ENCODE measurements at regions of chr19 and their contacts with region 1.

Region 1: DNA sequence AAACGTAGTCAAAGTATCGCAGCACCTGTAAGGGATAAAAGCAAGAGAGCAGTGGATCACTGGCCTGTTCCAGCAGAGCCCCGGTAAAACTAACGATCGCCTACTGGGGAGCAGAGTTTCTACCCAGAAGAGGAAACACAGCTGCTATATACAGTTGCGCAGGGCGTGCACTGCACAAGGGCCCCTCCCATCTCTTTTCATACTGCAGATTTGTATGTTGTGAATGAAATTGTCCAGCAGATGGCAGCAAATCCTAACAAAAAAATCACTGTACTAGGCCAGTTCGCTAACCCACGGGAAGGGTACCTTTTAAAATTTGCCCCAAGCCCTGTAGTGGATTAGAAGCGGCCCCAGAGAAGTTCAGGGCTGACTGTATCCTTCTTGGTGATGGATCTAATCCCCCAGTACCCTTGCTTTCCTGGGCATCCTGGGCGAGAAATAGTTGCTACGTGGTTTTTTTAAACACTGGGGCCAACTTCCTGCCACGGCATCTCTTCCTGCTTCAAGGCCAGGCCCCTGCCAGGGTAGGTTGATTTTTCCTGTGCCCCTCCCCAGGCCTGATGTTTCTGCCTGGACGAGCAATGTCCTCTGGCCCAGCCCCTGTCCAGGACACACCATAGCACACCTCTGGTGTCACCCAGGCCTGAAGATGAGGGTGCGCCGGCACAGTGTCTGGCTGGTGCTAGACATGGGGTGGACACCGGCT is 127.0 kb downstream of the IER2 start:
- DNase-seq: peak; percentile 26 to 88 (median 59)
- ATAC-seq: peak; percentile 89
- H3K4me3 ChIP-seq: peak overlapping the region; percentile 23 to 31
- H3K4me3 Mint-ChIP-seq: peak overlapping the region; percentile 48
- H3K27ac ChIP-seq: peak overlapping the region in 1 of 2 experiments; percentile 75
- H3K27ac Mint-ChIP-seq: peak overlapping the region; percentile 84
- H3K4me1 ChIP-seq: peaks cover 7% of the 10 kb centered on the region
- H3K4me1 Mint-ChIP-seq: peaks cover 17% of the 10 kb centered on the region
- H3K27me3 ChIP-seq: no peaks in the 10 kb centered on the region
- H3K27me3 Mint-ChIP-seq: peaks cover 8% of the 10 kb centered on the region
- CTCF ChIP-seq: peak; percentile 77

Region 2: DNA sequence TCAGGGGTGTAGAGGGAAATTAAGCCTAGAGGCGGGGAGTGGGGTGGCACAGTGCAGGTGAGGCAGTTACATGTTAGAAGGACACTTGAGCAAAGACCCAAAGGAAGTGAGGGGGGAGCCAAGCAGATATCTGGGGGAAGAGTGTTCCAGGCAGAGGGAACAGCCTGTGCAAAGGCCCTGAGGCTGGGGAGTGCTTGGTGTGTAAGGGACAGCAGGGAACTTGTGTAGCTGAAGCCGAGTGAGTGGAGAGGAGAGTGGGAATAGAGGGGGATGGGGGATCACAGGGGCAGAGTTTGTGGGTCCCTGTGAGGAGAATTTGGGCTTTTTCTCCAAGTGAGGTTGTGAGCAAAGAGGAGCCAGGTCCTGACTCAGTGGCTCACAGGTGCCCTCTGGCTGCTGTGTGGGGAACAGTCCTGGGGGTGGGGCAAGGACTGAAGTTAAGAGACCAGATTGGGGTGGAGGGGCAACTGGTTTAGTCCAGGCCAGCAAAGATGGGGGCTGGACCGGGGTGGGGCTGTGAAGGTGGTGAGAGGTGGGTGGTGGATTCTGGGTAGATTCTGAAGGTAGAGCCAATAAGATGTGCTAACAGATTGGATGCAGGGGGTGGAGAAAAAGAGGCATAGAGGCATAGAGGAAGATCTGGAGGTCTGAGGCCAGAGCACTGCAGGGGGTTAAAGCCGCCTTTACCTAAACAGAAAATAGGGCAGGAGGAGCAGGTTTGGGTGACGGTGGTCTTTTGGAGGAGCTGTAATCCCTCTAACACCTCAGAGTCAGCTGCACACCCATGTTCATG is 153.7 kb after region 1 on chr19:
- CTCF ChIA-PET with region 1: interaction called, 13 read pairs
- POLR2A ChIA-PET with region 1: no interaction called
- intact Hi-C with region 1: loop called in 1 of 2 experiments (anchors 1 kb)
- DNase-seq: peak; percentile 10 to 56 (median 42)
- ATAC-seq: peak; percentile 58
- H3K4me3 ChIP-seq: no peak overlapping the region
- H3K4me3 Mint-ChIP-seq: no peak overlapping the region
- H3K27ac ChIP-seq: no peak overlapping the region
- H3K27ac Mint-ChIP-seq: no peak overlapping the region
- H3K4me1 ChIP-seq: no peaks in the 10 kb centered on the region
- H3K4me1 Mint-ChIP-seq: no peaks in the 10 kb centered on the region
- H3K27me3 ChIP-seq: no peaks in the 10 kb centered on the region
- H3K27me3 Mint-ChIP-seq: peaks cover 29% of the 10 kb centered on the region
- CTCF ChIP-seq: peak; percentile 26

Region 3: DNA sequence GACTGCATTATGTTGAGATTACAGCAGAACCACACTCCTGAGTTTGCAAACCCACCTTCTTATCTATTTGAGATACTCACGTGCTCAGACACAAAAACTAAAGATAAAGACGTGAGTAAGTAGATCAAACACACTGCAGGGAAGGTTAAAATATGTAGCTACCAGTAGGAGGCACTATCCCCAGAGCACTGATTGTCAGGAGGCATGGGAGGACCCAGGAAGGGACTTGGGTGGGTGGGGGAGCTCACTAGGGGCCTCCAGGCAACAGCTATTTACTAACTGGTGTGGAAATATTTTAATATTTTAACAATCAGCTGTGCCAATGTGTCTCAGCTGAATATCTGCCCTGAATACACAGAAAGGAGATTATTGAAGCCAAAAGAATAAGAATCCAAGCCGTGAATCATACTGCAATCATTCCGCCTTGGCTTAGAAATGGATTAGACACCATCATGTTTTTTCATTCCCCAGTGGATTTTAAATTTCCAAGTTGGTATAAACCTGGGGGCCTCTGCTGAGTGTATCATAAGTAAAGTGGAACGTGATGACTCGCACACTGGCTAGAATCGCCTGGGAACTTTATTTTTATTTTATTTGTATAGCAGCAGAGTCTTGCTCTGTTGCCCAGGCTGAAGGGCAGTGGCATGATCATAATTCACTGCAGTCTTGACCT is 302.3 kb after region 1 on chr19:
- CTCF ChIA-PET with region 1: interaction called, 11 read pairs
- POLR2A ChIA-PET with region 1: no interaction called
- intact Hi-C with region 1: no loop called
- DNase-seq: no peak
- ATAC-seq: no peak
- H3K4me3 ChIP-seq: no peak overlapping the region
- H3K4me3 Mint-ChIP-seq: no peak overlapping the region
- H3K27ac ChIP-seq: no peak overlapping the region
- H3K27ac Mint-ChIP-seq: no peak overlapping the region
- H3K4me1 ChIP-seq: no peaks in the 10 kb centered on the region
- H3K4me1 Mint-ChIP-seq: no peaks in the 10 kb centered on the region
- H3K27me3 ChIP-seq: peaks cover 0 to 4% of the 10 kb centered on the region in 2 experiments
- H3K27me3 Mint-ChIP-seq: peaks cover 16% of the 10 kb centered on the region
- CTCF ChIP-seq: no peak

Region 4: GRCh38 chr19:13588957-13589833 is 311.9 kb after region 1 on chr19:
- CTCF ChIA-PET with region 1: interaction called, 69 read pairs
- POLR2A ChIA-PET with region 1: interaction called, 3 read pairs
- intact Hi-C with region 1: loop called in 1 of 2 experiments (anchors 1 kb)
- DNase-seq: peak; percentile 71 to 92 (median 79)
- ATAC-seq: peak; percentile 95
- H3K4me3 ChIP-seq: no peak overlapping the region
- H3K4me3 Mint-ChIP-seq: peak overlapping the region; percentile 26
- H3K27ac ChIP-seq: no peak overlapping the region
- H3K27ac Mint-ChIP-seq: no peak overlapping the region
- H3K4me1 ChIP-seq: peaks cover 9% of the 10 kb centered on the region
- H3K4me1 Mint-ChIP-seq: no peaks in the 10 kb centered on the region
- H3K27me3 ChIP-seq: peaks cover 0 to 2% of the 10 kb centered on the region in 2 experiments
- H3K27me3 Mint-ChIP-seq: peaks cover 23% of the 10 kb centered on the region
- CTCF ChIP-seq: peak; percentile 91

Region 5: GRCh38 chr19:13731147-13731964 is 454.1 kb after region 1 on chr19:
- CTCF ChIA-PET with region 1: no interaction called
- POLR2A ChIA-PET with region 1: no interaction called
- intact Hi-C with region 1: loop called in 1 of 2 experiments (anchors 5 kb)
- DNase-seq: peak; percentile 87 to 97 (median 93)
- ATAC-seq: peak; percentile 100
- H3K4me3 ChIP-seq: peak overlapping the region; percentile 59 to 87
- H3K4me3 Mint-ChIP-seq: peak overlapping the region; percentile 90
- H3K27ac ChIP-seq: peak overlapping the region; percentile 57 to 59
- H3K27ac Mint-ChIP-seq: peak overlapping the region; percentile 74
- H3K4me1 ChIP-seq: peaks cover 7% of the 10 kb centered on the region
- H3K4me1 Mint-ChIP-seq: peaks cover 8% of the 10 kb centered on the region
- H3K27me3 ChIP-seq: no peaks in the 10 kb centered on the region
- H3K27me3 Mint-ChIP-seq: no peaks in the 10 kb centered on the region
- CTCF ChIP-seq: no peak